PC-9 (cell line): ENCODE measurements at regions of chr7 and their contacts with region 1.

Region 1: GRCh38 chr7:142420559-142421362 is 162.9 kb upstream of the PRSS58 start:
- DNase-seq: peak; percentile 74 to 79
- H3K4me3 ChIP-seq: no peak overlapping the region
- H3K27ac ChIP-seq: 0 out of 2 replicates have a peak overlapping the region, but pooled peaks have one; percentile 22
- H3K4me1 ChIP-seq: peaks cover 9% of the 10 kb centered on the region
- H3K27me3 ChIP-seq: no peaks in the 10 kb centered on the region
- CTCF ChIP-seq: peak; percentile 59; the same call in 1 of the 2 replicates

Region 2: DNA sequence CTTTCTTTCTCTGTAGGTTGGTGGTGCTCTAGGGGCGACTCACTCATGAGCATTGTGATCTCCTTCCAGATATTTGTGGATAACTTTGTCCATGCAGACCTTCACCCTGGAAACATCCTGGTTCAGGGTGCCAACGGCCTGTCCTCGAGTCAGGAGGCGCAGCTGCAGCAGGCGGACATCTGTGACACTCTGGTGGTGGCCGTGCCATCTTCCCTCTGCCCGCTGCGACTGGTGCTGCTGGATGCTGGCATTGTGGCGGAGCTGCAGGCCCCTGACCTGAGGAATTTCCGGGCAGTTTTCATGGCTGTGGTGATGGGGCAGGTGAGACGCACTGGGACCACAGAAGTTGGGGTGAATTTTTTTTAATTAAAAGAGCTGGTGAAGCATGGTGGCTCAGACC is 1733.8 kb before region 1 on chr7:
- CTCF ChIA-PET with region 1: interaction called, 13 read pairs
- POLR2A ChIA-PET with region 1: no interaction called
- intact Hi-C with region 1: no loop called
- DNase-seq: no peak
- H3K4me3 ChIP-seq: no peak overlapping the region
- H3K27ac ChIP-seq: no peak overlapping the region
- H3K4me1 ChIP-seq: no peaks in the 10 kb centered on the region
- H3K27me3 ChIP-seq: no peaks in the 10 kb centered on the region
- CTCF ChIP-seq: no peak

Region 3: DNA sequence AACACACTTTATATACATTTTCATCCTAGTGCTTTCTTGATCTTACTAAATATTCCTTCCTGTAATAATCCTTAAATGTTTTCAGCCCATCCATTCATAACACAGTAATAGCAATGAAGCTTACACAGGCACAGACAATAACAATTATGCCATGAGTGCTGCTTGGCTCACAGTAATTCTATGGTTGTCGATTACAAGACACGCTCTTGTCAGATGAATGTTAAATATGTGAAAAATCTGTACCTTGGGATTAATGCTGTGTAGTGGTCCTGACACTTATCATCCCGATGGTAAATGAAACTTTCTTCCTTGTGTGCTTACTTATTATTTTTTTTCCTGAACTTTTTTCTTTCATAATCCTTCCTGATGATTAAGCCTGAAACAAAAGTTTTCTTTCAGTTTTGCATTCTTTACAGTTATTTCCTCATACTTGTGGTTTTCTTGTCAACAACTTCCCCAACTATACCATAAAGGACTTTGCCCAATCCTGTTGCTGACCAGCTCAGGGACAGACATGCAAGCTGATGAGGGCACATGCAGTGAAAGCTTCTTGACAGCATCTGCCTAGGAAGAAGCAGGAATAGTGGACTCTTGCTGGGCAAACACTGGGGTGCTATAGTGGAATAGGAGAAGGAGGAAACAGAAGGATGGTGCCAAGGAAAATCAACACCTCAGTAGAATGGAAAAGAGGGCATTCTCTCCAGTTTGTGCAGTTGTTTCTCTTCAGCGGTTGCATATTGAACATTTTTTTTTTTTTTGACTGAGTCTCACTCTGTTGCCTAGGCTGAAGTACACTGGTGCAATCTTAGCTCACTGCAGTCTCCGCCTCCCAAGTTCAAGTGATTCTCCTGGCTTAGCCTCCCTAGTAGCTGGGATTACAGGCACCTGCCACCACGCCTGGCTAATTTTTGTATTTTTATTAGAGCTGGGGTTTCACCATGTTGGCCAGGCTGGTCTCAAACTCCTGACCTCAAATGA is 315.9 kb before region 1 on chr7:
- CTCF ChIA-PET with region 1: no interaction called
- POLR2A ChIA-PET with region 1: no interaction called
- intact Hi-C with region 1: no loop called
- DNase-seq: peak; percentile 71 to 99
- H3K4me3 ChIP-seq: no peak overlapping the region
- H3K27ac ChIP-seq: peak overlapping the region; percentile 87
- H3K4me1 ChIP-seq: peaks cover 32% of the 10 kb centered on the region
- H3K27me3 ChIP-seq: no peaks in the 10 kb centered on the region
- CTCF ChIP-seq: no peak

Region 4: DNA sequence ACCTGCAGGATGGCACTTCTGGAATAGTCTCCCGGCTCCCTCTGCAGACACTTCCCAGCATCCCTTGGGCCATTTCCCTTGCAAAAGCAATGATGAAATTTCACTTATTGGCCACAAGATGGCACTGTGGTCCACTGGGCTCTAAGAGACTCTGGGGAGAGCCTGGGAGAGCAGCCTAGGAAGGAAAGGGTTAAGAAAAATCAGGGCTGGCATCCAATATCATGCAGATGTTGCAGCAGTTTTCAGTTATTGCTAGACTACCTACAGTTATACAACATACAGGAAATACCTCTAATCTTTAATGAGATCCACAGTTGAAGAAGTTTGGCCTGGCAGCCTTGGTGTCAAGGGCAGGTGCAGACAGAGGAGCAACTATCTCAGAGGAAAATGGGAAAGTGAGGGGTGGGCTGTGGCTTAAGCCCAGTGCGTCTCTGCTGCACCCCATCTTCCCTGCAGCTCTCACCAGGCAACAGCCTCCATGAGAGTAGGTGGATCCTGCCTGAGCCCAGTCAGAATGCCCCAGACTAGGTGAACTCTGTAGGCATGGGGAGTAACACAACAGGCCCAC is 62.7 kb before region 1 on chr7:
- CTCF ChIA-PET with region 1: no interaction called
- POLR2A ChIA-PET with region 1: no interaction called
- intact Hi-C with region 1: loop called (anchors 1 kb)
- DNase-seq: peak; percentile 71 to 75
- H3K4me3 ChIP-seq: peak overlapping the region; percentile 27; the same call in 1 of the 2 replicates
- H3K27ac ChIP-seq: peak overlapping the region; percentile 0; the same call in 1 of the 2 replicates
- H3K4me1 ChIP-seq: peaks cover 28% of the 10 kb centered on the region
- H3K27me3 ChIP-seq: no peaks in the 10 kb centered on the region
- CTCF ChIP-seq: peak; percentile 98

Region 5: DNA sequence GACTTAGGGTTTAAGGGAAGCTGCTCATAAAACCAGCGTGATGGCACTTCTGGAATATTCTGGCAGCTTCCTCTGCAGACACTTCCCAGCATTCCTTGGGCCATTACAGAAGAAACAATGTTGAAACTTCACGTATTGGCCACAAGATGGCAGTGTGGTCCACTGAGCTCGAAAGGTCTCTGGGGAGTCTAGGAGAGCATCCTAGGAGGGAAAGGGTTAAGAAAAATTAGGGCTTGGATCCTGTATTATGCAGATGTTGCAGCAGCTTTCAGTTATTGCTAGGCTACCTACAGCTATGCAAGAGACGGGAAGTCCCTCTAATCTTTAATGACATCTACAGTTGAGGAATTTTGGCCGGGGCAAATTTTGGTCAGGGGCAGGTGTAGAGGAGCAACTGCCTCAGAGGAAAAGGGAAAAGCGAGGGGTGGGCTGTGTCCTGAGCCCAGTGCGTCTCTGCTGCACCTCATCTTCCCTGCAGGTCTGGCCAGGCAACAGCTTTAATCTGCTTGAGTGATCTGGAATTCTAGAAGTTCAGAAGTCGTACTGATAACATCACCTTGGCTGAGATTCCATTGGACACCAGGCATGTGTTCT is 57.8 kb after region 1 on chr7:
- CTCF ChIA-PET with region 1: interaction called, 6 read pairs
- POLR2A ChIA-PET with region 1: no interaction called
- intact Hi-C with region 1: loop called (anchors 1 kb)
- DNase-seq: peak; percentile 58 to 74
- H3K4me3 ChIP-seq: no peak overlapping the region
- H3K27ac ChIP-seq: no peak overlapping the region
- H3K4me1 ChIP-seq: peaks cover 16% of the 10 kb centered on the region
- H3K27me3 ChIP-seq: no peaks in the 10 kb centered on the region
- CTCF ChIP-seq: peak; percentile 91

Region 6: GRCh38 chr7:142516038-142516501 is 95.3 kb after region 1 on chr7:
- CTCF ChIA-PET with region 1: no interaction called
- POLR2A ChIA-PET with region 1: no interaction called
- intact Hi-C with region 1: loop called (anchors 5 kb)
- DNase-seq: peak; percentile 72 to 87
- H3K4me3 ChIP-seq: no peak overlapping the region
- H3K27ac ChIP-seq: peak overlapping the region; percentile 79
- H3K4me1 ChIP-seq: peaks cover 48% of the 10 kb centered on the region
- H3K27me3 ChIP-seq: no peaks in the 10 kb centered on the region
- CTCF ChIP-seq: peak; percentile 97

Region 7: DNA sequence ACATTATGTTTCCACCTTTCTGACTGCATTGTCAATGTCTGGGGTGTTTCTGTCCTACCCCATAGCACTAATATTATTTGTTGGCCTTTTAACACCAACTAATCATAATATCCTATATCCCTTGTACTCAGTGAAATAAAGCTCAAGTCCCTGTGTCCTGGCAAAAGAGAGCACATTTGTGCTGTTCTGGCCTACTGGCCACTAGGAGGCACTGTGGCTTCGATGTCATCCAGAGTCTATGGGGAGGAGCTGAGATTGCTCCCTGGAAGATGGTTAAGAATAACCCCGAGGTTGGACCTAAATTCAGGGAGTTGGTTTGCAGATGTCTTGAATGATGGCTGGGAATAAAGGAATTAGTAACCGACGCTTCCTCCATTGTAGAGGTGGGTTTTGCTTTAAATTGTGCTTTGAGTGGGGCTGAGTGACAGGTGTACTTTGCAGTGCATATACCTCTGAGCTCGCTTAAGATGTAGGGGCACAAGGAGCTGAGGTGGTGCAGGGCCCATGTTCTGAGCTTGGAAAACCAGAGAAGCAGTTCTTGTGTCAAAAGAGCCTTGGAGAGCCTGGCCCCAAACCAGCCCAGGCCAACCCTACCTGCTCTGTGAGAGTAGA is 137.3 kb after region 1 on chr7:
- CTCF ChIA-PET with region 1: no interaction called
- POLR2A ChIA-PET with region 1: no interaction called
- intact Hi-C with region 1: no loop called
- DNase-seq: peak in 1 of 2 experiments; percentile 14
- H3K4me3 ChIP-seq: no peak overlapping the region
- H3K27ac ChIP-seq: peak overlapping the region; percentile 78
- H3K4me1 ChIP-seq: peaks cover 55% of the 10 kb centered on the region
- H3K27me3 ChIP-seq: no peaks in the 10 kb centered on the region
- CTCF ChIP-seq: peak; percentile 74

Region 8: DNA sequence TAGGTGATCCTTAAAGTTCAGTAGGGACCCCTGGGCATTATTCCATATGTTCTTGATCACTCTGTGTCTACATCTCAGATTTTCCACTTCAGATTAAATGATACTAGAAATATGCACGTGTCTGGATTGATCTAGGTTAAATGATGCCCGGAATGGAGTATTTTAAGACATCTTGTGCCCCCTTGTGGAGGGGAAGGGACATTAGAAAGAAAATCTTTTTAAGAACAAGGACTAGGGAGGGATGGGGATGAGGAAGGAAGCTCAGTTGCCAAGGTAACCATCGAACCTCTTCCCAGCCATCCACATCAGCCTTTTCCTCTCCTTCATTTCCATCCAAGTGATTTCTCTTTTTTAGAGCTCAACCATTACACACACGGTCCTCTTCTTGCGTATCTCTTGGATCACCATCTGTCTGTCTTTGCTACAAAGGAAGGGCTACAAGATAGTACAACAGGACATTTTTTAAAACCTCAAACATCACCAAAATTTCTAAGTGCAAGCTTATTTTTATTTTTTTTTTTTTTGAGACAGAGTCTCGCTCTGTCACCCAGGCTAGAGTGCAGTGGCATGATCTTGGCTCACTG is 390.5 kb after region 1 on chr7:
- CTCF ChIA-PET with region 1: no interaction called
- POLR2A ChIA-PET with region 1: no interaction called
- intact Hi-C with region 1: loop called (anchors 1 kb)
- DNase-seq: peak; percentile 22 to 78
- H3K4me3 ChIP-seq: no peak overlapping the region
- H3K27ac ChIP-seq: peak overlapping the region; percentile 96
- H3K4me1 ChIP-seq: peaks cover 84% of the 10 kb centered on the region
- H3K27me3 ChIP-seq: no peaks in the 10 kb centered on the region
- CTCF ChIP-seq: peak; percentile 95